Cardiac septum (tissue), 1 donor: ENCODE measurements at regions of chr9 and their contacts with region 1.

Region 1: GRCh38 chr9:136790927-136791641 is at the start of gene TMEM141:
- DNase-seq: peak; percentile 100
- total RNA-seq, gene TMEM141: 62.5 TPM

Region 2: DNA sequence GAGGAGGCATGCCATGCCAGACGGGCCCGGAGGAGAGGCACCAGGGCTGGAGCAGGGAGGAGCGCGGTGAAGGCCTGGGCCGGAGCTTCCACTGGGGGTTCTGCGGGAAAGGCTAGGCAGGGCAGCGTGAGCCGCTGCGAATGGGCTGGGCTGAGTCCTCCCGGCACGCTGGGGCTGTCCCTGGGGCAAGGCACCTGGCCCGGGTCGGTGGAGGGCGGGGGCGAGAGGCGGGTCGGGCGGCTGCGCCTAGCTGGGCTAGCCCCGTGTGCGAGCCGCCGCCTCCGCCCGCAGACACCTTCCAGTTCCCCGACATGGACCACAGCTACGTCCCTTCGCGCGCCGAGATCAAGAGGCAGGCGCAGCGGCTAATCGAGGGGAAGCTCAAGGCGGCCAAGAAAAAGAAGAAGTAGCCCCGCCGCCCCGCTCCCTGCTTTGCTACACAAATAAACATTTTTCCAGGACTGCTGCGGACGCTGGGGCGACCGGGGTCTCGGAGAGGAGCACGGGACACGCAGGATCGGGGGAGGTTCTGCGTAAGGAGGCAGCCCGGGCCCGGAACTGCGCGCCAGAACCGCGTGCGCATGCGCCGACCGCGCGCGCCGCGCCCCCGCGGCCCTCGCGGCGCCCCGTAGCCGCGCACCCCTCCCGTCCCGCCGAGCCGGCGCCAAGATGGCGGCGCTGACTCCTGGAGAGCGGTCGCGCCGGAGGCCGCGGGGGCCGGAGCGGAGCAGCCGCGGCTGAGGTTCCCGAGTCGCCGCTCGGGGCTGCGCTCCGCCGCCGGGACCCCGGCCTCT is 16.4 kb after region 1 on chr9 and contains the start of gene RABL6:
- intact Hi-C with region 1: loop called (anchors 1 kb)
- DNase-seq: peak; percentile 89
- total RNA-seq, gene RABL6: 66.4 TPM

Region 3: DNA sequence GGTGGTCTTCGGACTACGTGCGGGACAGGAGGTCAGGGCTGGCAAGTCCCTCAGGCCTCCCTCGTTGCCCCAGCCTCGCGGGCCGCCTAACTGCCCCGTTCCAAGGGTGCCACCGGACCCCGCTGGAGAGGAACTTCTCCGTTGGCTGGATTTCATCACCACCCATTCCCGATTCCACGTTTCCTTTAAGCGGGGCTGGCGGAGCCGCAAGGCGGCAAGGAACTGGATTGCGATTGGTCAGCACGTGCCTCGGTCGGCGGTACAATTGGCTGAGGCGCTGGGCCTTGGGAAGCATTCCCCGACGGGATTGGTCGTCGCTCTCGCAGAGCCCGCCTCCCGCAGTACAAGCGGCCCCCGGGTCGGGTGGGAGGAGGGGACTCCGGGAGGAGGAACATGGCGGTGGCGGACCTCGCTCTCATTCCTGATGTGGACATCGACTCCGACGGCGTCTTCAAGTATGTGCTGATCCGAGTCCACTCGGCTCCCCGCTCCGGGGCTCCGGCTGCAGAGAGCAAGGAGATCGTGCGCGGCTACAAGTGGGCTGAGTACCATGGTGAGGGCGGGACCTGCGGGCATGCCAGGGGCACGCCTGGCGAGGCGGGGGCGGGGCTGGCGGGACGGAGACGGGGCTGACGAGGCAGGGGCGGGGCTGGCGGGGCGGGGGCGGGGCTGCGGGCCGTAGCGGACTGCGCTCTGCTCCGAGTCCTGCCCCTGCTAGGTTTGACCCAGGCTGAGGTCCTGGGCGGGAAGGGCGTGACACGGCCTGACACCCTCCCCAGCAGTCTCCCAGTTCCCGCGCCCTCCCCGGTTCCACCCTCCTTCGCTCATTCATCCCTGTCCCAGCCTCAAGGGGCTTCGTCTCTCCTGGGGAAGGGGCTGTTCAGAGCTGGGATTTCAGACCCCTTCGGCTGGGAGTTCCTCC is 58.2 kb after region 1 on chr9 and contains the start of gene PHPT1:
- intact Hi-C with region 1: loop called (anchors 5 kb)
- DNase-seq: peak; percentile 99
- total RNA-seq, gene PHPT1: 296 TPM

Region 4: GRCh38 chr9:137029058-137029936 is 238.2 kb after region 1 on chr9:
- intact Hi-C with region 1: loop called (anchors 2 kb)
- DNase-seq: peak; percentile 90

Region 5: GRCh38 chr9:137067860-137068538 is 276.9 kb after region 1 on chr9:
- intact Hi-C with region 1: loop called (anchors 10 kb)
- DNase-seq: peak; percentile 93